GM12878 (cell line): ENCODE measurements at regions of chr1 and their contacts with region 1.

Region 1: GRCh38 chr1:62131093-62131725 is 63.4 kb upstream of the L1TD1 start:
- DNase-seq: no peak
- ATAC-seq: peak; percentile 99
- H3K4me3 ChIP-seq: no peak overlapping the region
- H3K27ac ChIP-seq: no peak overlapping the region
- H3K4me1 ChIP-seq: no peaks in the 10 kb centered on the region
- H3K27me3 ChIP-seq: no peaks in the 10 kb centered on the region
- CTCF ChIP-seq: peak; percentile 86 to 96 (median 96)
- EP300 ChIP-seq: no peak
- POLR2A ChIP-seq: no peak
- RAD21 ChIP-seq: peak; percentile 82

Region 2: DNA sequence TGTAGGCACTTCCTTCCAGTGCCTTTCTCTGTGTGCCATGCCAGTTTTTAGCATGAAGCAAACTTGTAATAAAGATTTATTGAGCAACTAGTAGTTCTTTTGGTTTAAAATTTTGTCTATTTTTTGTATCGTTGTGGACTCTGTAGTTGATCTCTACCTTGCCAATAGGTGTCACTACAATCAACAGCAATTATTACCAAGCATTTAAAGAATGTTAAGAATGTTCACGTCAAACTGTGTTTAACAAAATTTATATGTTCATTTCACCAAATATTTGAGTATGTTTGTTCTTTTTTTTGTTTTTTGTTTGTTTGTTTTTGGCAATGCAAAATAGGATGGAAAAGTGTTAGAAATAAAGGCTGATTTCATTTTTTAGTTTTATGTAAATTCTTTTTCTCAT is 180.8 kb before region 1 on chr1:
- CTCF ChIA-PET with region 1: interaction called, 4 read pairs
- POLR2A ChIA-PET with region 1: no interaction called
- RAD21 ChIA-PET with region 1: no interaction called
- SMC1A ChIA-PET with region 1: no interaction called
- in situ Hi-C with region 1: no loop called
- intact Hi-C with region 1: loop called (anchors 10 kb)
- DNase-seq: no peak
- ATAC-seq: no peak
- H3K4me3 ChIP-seq: no peak overlapping the region
- H3K27ac ChIP-seq: no peak overlapping the region
- H3K4me1 ChIP-seq: no peaks in the 10 kb centered on the region
- H3K27me3 ChIP-seq: no peaks in the 10 kb centered on the region
- CTCF ChIP-seq: peak in 1 of 3 experiments; percentile 15; a peak in 1 of 6 replicates
- EP300 ChIP-seq: no peak
- POLR2A ChIP-seq: no peak
- RAD21 ChIP-seq: peak; percentile 42; the same call in 1 of the 2 replicates

Region 3: DNA sequence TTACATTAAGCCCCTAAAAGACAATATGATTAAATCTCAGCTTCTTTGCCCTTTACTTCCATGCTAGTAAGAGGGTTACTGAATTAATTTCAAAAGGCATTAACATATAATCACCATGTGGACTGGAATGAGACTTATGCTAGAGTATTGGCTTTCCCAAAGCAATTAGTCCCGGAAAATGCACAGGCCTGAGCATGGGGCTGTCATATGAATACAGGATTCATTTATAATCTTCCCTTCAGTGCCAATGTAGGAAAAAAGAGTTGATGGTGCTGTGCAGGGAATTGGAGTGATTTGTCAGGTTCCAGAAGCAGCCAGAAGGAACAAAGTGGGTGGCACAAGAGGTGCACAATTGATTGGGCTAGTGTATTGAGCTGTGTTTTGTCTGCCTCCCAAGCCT is 135.6 kb before region 1 on chr1:
- CTCF ChIA-PET with region 1: no interaction called
- POLR2A ChIA-PET with region 1: no interaction called
- RAD21 ChIA-PET with region 1: no interaction called
- SMC1A ChIA-PET with region 1: no interaction called
- in situ Hi-C with region 1: no loop called
- intact Hi-C with region 1: no loop called
- DNase-seq: no peak
- ATAC-seq: no peak
- H3K4me3 ChIP-seq: no peak overlapping the region
- H3K27ac ChIP-seq: no peak overlapping the region
- H3K4me1 ChIP-seq: no peaks in the 10 kb centered on the region
- H3K27me3 ChIP-seq: no peaks in the 10 kb centered on the region
- CTCF ChIP-seq: no peak
- EP300 ChIP-seq: no peak
- POLR2A ChIP-seq: no peak
- RAD21 ChIP-seq: no peak

Region 4: DNA sequence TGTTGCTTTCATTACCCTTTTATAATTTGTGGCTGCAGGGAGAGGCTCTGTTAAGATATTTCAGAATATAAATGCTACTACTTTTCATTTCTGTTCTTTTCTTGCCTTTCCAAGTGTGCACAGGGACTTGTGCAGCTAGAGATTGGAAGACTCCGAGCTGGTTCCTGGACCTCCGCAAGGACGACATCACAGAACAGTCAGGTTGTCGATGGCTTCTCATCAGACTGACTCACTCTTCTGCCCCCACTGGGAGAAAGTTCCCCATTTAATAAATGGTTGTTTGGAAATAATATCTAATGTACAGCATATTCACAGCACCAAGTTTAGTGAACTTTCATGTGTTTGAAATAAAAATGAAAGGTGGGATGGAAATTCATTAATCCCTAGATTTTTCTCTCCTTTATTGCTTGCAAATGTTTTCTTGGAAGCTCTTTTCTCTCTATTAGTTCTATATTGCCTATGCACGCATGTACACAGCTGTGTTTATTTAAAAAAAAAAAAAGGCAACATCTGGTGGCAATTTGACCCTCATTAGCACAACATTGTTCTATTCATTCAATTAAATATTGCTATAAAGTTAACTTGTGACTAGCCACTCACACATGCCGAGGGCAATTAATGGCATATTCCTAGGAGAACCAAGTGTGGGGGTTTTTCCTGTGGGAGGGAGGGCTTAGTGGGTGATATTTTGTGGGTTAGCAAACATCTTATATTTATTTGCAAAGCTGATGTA is 14.0 kb before region 1 on chr1:
- CTCF ChIA-PET with region 1: interaction called, 19 read pairs
- POLR2A ChIA-PET with region 1: no interaction called
- RAD21 ChIA-PET with region 1: no interaction called
- SMC1A ChIA-PET with region 1: interaction called, 5 read pairs
- in situ Hi-C with region 1: no loop called
- intact Hi-C with region 1: no loop called
- DNase-seq: no peak
- ATAC-seq: no peak
- H3K4me3 ChIP-seq: no peak overlapping the region
- H3K27ac ChIP-seq: no peak overlapping the region
- H3K4me1 ChIP-seq: no peaks in the 10 kb centered on the region
- H3K27me3 ChIP-seq: no peaks in the 10 kb centered on the region
- CTCF ChIP-seq: no peak
- EP300 ChIP-seq: no peak
- POLR2A ChIP-seq: no peak
- RAD21 ChIP-seq: no peak

Region 5: GRCh38 chr1:62144238-62144831 is 13.1 kb after region 1 on chr1:
- CTCF ChIA-PET with region 1: interaction called, 67 read pairs
- POLR2A ChIA-PET with region 1: no interaction called
- RAD21 ChIA-PET with region 1: interaction called, 5 read pairs
- SMC1A ChIA-PET with region 1: interaction called, 3 read pairs
- in situ Hi-C with region 1: no loop called
- intact Hi-C with region 1: no loop called
- DNase-seq: no peak
- ATAC-seq: peak; percentile 75
- H3K4me3 ChIP-seq: no peak overlapping the region
- H3K27ac ChIP-seq: no peak overlapping the region
- H3K4me1 ChIP-seq: no peaks in the 10 kb centered on the region
- H3K27me3 ChIP-seq: no peaks in the 10 kb centered on the region
- CTCF ChIP-seq: peak; percentile 64 to 81 (median 76)
- EP300 ChIP-seq: no peak
- POLR2A ChIP-seq: no peak
- RAD21 ChIP-seq: peak; percentile 66

Region 6: DNA sequence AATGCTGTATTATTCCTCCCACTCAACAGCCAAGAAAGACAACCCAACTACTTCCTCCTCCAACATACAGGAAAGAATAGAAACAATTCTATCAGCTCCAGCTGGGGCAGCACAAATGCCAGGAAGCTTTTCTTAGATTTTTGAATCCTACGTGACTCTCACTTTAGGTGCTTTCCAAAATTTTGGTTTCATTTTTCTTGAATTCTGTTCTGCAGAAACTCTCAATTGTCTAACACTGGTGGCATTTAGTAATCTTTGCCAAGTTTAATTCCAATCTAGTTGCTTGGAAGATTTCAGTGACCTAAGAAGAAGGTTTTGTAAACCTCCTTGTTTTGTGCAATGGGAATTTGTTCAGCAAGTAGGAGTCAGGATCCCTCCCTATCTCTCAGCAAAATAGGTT is 594.0 kb after region 1 on chr1:
- CTCF ChIA-PET with region 1: no interaction called
- POLR2A ChIA-PET with region 1: no interaction called
- RAD21 ChIA-PET with region 1: no interaction called
- SMC1A ChIA-PET with region 1: no interaction called
- in situ Hi-C with region 1: no loop called
- intact Hi-C with region 1: no loop called
- DNase-seq: peak; percentile 19
- ATAC-seq: peak; percentile 42
- H3K4me3 ChIP-seq: 0 out of 2 replicates have a peak overlapping the region, but pooled peaks have one; percentile 7
- H3K27ac ChIP-seq: no peak overlapping the region
- H3K4me1 ChIP-seq: 0 out of 2 replicates have a peak, but pooled peaks cover 5% of the 10 kb centered on the region
- H3K27me3 ChIP-seq: no peaks in the 10 kb centered on the region
- CTCF ChIP-seq: no peak
- EP300 ChIP-seq: no peak
- POLR2A ChIP-seq: no peak
- RAD21 ChIP-seq: no peak